CD4-positive, alpha-beta memory T cell (primary cell): ENCODE measurements at regions of chr15 and their contacts with region 1.

Region 1: GRCh38 chr15:43868406-43868805 is 41.6 kb downstream of the WDR76 start:
- DNase-seq: no peak
- H3K4me3 ChIP-seq: no peak overlapping the region
- H3K4me3 Mint-ChIP-seq: no peak overlapping the region
- H3K27ac ChIP-seq: no peak overlapping the region
- H3K27ac Mint-ChIP-seq: peak overlapping the region in 1 of 7 donors; percentile 50
- H3K4me1 ChIP-seq: no peaks in the 10 kb centered on the region
- H3K4me1 Mint-ChIP-seq: peaks cover 0 to 1% (median 0%) of the 10 kb centered on the region in 4 donors
- H3K27me3 ChIP-seq: no peaks in the 10 kb centered on the region
- H3K27me3 Mint-ChIP-seq: no peaks in the 10 kb centered on the region

Region 2: GRCh38 chr15:43880406-43881194 is 12.2 kb after region 1 on chr15:
- CTCF ChIA-PET with region 1: interaction called, 11 read pairs
- POLR2A ChIA-PET with region 1: no interaction called
- intact Hi-C with region 1: no loop called
- DNase-seq: no peak
- H3K4me3 ChIP-seq: no peak overlapping the region
- H3K4me3 Mint-ChIP-seq: no peak overlapping the region
- H3K27ac ChIP-seq: no peak overlapping the region
- H3K27ac Mint-ChIP-seq: peak overlapping the region in 1 of 7 donors; percentile 74
- H3K4me1 ChIP-seq: no peaks in the 10 kb centered on the region
- H3K4me1 Mint-ChIP-seq: no peaks in the 10 kb centered on the region
- H3K27me3 ChIP-seq: no peaks in the 10 kb centered on the region
- H3K27me3 Mint-ChIP-seq: no peaks in the 10 kb centered on the region